Caco-2 (cell line): ENCODE measurements at regions of chr14 and their contacts with region 1.

Region 1: GRCh38 chr14:54691525-54692283 is 124.8 kb downstream of the SAMD4A start:
- DNase-seq: peak; percentile 71 to 82
- H3K4me3 ChIP-seq: no peak overlapping the region
- H3K4me3 Mint-ChIP-seq: no peak overlapping the region
- H3K27ac Mint-ChIP-seq: peak overlapping the region; percentile 58
- H3K4me1 ChIP-seq: no peaks in the 10 kb centered on the region
- H3K4me1 Mint-ChIP-seq: peaks cover 33% of the 10 kb centered on the region
- H3K27me3 ChIP-seq: no peaks in the 10 kb centered on the region
- H3K27me3 Mint-ChIP-seq: no peaks in the 10 kb centered on the region
- CTCF ChIP-seq: peak; percentile 77 to 93

Region 2: DNA sequence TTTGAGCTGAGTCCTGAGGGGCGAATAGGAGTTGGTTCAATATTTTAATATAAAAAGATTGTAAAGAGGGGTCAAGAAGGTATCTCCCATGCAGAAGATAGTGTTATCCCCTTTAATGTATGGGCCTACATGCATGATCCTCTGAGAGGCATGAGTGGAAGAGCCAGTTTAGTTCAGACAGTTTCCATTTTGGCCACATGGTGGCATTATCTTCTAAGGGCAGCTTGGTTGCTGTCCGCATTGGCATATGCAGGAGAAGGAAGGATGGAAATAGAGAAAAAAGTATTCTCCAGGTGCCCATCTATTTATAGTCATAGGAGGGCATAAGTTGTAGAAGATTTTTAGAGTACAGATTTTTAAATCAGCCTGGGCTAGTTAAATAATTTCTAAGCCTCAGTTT is 119.4 kb before region 1 on chr14:
- CTCF ChIA-PET with region 1: interaction called, 8 read pairs
- POLR2A ChIA-PET with region 1: no interaction called
- intact Hi-C with region 1: loop called (anchors 1 kb)
- DNase-seq: peak in 1 of 2 experiments; percentile 68
- H3K4me3 ChIP-seq: no peak overlapping the region
- H3K4me3 Mint-ChIP-seq: no peak overlapping the region
- H3K27ac Mint-ChIP-seq: no peak overlapping the region
- H3K4me1 ChIP-seq: peaks cover 29% of the 10 kb centered on the region
- H3K4me1 Mint-ChIP-seq: peaks cover 33% of the 10 kb centered on the region
- H3K27me3 ChIP-seq: no peaks in the 10 kb centered on the region
- H3K27me3 Mint-ChIP-seq: no peaks in the 10 kb centered on the region
- CTCF ChIP-seq: peak; percentile 53 to 60

Region 3: GRCh38 chr14:54642801-54643697 is 48.7 kb before region 1 on chr14:
- CTCF ChIA-PET with region 1: interaction called, 9 read pairs
- POLR2A ChIA-PET with region 1: no interaction called
- intact Hi-C with region 1: loop called (anchors 1 kb)
- DNase-seq: peak; percentile 79
- H3K4me3 ChIP-seq: no peak overlapping the region
- H3K4me3 Mint-ChIP-seq: peak overlapping the region; percentile 75
- H3K27ac Mint-ChIP-seq: peak overlapping the region; percentile 87
- H3K4me1 ChIP-seq: peaks cover 79% of the 10 kb centered on the region
- H3K4me1 Mint-ChIP-seq: peaks cover 31% of the 10 kb centered on the region
- H3K27me3 ChIP-seq: no peaks in the 10 kb centered on the region
- H3K27me3 Mint-ChIP-seq: no peaks in the 10 kb centered on the region
- CTCF ChIP-seq: peak in 1 of 2 experiments; percentile 23

Region 4: DNA sequence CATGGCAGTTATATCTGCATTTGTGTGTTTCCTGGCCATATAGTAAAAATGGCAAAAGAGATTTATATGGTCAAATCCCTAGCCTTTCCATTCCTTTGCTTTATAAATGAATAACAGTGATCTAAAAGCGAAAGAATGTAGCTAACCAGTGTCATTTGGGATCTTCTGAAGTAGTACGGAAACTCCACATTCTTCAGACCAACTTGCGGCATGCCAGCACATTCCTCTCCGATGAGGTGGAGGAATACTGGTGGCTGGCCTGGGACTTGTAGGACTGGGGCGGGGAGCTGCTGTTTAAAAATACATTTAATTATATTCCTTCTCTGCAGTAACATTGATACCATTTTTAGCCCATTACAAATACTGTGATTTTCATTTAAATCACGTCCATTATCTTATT is 39.5 kb before region 1 on chr14:
- CTCF ChIA-PET with region 1: interaction called, 5 read pairs
- POLR2A ChIA-PET with region 1: interaction called, 3 read pairs
- intact Hi-C with region 1: loop called (anchors 2 kb)
- DNase-seq: peak; percentile 76 to 85
- H3K4me3 ChIP-seq: 0 out of 2 replicates have a peak overlapping the region, but pooled peaks have one; percentile 4
- H3K4me3 Mint-ChIP-seq: peak overlapping the region; percentile 52
- H3K27ac Mint-ChIP-seq: peak overlapping the region; percentile 66
- H3K4me1 ChIP-seq: peaks cover 96% of the 10 kb centered on the region
- H3K4me1 Mint-ChIP-seq: peaks cover 44% of the 10 kb centered on the region
- H3K27me3 ChIP-seq: no peaks in the 10 kb centered on the region
- H3K27me3 Mint-ChIP-seq: no peaks in the 10 kb centered on the region
- CTCF ChIP-seq: no peak

Region 5: DNA sequence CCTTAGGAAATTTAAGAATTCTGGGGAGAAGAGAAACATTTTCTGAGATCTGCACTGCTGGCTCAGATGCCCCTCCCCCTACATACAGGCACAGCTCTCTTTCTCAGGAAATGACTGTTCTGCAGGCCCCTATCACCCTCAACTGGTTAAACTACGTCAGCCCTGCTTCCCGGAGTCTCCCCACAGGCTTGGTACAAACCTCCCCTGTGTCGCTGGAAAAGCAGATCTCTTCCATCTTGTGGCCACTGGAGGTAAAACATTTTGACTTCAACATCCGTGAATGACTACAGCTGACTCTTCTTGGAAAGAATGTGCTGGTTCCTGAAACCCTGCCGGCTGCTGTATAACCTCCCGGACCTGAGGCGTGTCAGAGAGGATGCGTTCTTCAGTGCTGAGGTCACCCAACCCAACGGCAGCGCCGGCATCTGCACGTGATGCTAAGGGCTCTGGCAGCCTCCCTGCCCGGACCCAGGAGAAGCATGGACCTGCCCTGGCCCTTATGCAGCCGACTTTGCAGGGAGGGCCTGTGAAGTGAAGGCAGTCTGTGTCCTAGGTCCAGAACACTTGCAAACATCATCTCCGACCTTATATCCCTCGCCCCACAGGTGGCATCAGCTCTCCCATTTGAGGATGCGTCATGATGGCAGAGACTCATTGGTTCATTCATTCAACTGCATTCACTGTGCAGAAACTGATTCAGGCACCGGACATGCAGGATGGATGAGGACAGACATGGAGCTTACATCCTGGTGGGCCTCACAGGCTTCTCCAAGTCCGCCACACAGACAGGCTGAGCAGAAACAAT is 81.7 kb after region 1 on chr14:
- CTCF ChIA-PET with region 1: interaction called, 10 read pairs
- POLR2A ChIA-PET with region 1: no interaction called
- intact Hi-C with region 1: no loop called
- DNase-seq: peak; percentile 72 to 81
- H3K4me3 ChIP-seq: no peak overlapping the region
- H3K4me3 Mint-ChIP-seq: peak overlapping the region; percentile 12
- H3K27ac Mint-ChIP-seq: peak overlapping the region; percentile 30
- H3K4me1 ChIP-seq: peaks cover 5% of the 10 kb centered on the region; the same call in 1 of the 2 replicates
- H3K4me1 Mint-ChIP-seq: peaks cover 12% of the 10 kb centered on the region
- H3K27me3 ChIP-seq: no peaks in the 10 kb centered on the region
- H3K27me3 Mint-ChIP-seq: no peaks in the 10 kb centered on the region
- CTCF ChIP-seq: peak; percentile 18 to 54

Region 6: DNA sequence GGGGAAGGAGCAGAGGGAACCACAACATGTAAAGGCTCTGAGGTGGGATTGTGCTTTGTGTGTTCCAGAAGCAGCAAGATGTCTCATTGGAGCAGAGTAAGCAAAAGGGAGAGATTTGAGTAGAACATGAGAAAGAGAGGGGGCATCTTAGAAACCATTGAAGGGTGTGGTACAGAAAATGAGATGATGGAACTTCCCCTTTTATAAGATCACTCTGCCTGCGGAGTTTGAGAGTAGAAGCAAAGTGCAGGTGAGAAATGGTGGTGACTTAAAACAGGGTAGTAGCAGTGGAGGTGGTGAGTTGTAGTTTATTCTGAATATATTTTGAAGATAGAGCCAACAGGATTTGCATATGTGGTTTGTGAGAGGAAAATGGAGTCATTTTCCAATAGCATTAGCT is 635.5 kb after region 1 on chr14:
- CTCF ChIA-PET with region 1: no interaction called
- POLR2A ChIA-PET with region 1: no interaction called
- intact Hi-C with region 1: no loop called
- DNase-seq: no peak
- H3K4me3 ChIP-seq: no peak overlapping the region
- H3K4me3 Mint-ChIP-seq: no peak overlapping the region
- H3K27ac Mint-ChIP-seq: no peak overlapping the region
- H3K4me1 ChIP-seq: peaks cover 1% of the 10 kb centered on the region; the same call in 1 of the 2 replicates
- H3K4me1 Mint-ChIP-seq: peaks cover 21% of the 10 kb centered on the region
- H3K27me3 ChIP-seq: no peaks in the 10 kb centered on the region
- H3K27me3 Mint-ChIP-seq: no peaks in the 10 kb centered on the region
- CTCF ChIP-seq: no peak